PC-3 (cell line): ENCODE measurements at regions of chr12 and their contacts with region 1.

Region 1: DNA sequence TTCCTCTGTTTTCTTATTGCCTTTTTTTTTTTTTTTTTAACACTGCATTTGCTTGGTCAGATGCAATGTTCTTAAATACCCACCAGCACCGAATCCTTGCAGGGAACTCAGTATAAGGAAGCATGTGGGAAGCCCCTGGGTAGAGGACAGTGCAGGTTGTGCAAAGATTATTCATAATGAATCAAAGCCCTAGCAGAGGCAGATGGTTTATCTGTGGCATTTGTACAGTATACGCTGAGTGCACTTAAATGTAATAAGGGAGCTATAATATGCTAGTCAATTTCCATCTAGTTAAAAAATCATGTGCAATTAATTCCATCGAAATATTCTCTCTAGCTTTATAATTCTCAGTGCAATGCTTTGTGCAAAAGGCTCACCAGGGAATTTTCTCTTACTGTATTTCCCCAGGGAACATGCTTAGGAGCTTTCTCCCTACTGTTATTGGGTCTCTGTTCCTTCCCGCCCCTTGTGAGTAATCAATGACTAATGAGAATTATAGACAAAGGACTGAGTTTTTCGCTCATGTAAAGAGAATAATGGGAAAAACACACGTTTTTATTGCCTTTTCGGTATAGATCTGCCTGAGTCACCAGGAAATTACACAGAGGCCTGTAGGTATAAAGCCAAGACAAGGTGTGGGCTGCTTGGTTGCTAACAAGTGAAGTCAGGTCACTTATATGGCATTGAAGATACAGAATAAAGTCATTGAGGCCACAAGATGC is 1214.3 kb upstream of the TMEM132C start:
- DNase-seq: peak; percentile 99
- ATAC-seq: peak; percentile 82
- H3K4me3 ChIP-seq: peak overlapping the region; percentile 59
- H3K27ac ChIP-seq: peak overlapping the region; percentile 99
- H3K4me1 ChIP-seq: peaks cover 50% of the 10 kb centered on the region
- H3K27me3 ChIP-seq: no peaks in the 10 kb centered on the region
- CTCF ChIP-seq: no peak

Region 2: DNA sequence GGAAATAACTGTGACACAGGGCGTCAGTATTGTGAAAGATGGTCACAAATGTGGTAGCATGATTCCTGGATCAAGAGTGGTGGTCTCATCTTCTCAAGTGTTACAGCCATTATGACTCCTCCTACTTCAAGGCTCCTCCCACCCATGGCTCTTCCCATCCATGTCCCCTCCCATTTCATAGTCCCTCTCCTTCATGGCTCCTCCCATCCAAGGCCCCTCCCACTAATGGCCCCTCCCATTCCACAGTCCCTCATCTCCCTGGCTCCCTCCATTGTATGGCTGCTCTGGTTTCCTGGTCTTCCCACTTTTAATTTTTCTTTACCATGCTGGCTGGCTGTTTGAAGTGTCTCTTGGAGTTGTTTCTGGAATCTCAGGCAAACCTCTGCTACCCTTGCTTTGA is 160.9 kb before region 1 on chr12:
- CTCF ChIA-PET with region 1: no interaction called
- POLR2A ChIA-PET with region 1: no interaction called
- intact Hi-C with region 1: no loop called
- DNase-seq: peak; percentile 13
- ATAC-seq: no peak
- H3K4me3 ChIP-seq: no peak overlapping the region
- H3K27ac ChIP-seq: no peak overlapping the region
- H3K4me1 ChIP-seq: no peaks in the 10 kb centered on the region
- H3K27me3 ChIP-seq: peaks cover 82% of the 10 kb centered on the region
- CTCF ChIP-seq: no peak

Region 3: DNA sequence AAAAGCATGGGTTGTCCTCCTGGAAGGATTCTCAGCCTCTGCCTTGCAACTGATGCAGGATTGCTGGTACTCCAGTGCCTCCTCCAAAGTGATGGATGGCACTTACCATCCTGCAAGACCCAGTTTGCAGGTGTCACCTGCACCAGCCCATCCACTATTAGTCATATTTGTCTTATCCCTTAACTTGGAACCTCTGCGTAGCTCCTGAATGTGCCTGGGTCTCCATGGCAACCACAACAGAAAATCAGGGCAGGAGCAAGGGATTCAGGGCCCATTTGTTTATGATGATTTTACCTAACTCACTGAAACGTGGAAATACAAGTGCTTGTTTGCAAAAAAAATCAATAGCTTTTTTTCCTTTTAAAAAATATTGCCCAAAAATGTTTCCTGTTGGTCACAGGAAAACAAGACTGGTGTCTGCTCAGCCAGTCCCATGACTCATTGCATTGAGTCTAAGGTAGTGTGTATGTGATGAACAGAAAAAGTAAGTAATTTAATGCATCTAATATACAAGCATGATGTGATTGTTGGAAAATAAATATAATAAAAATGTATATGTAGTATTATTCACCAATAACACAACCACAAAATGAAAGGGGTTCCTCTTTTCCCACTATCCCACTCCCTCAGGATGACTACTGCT is 18.0 kb after region 1 on chr12:
- CTCF ChIA-PET with region 1: no interaction called
- POLR2A ChIA-PET with region 1: interaction called, 8 read pairs
- intact Hi-C with region 1: loop called (anchors 2 kb)
- DNase-seq: peak; percentile 40
- ATAC-seq: peak; percentile 92
- H3K4me3 ChIP-seq: no peak overlapping the region
- H3K27ac ChIP-seq: peak overlapping the region; percentile 75
- H3K4me1 ChIP-seq: peaks cover 11% of the 10 kb centered on the region; the same call in 1 of the 2 replicates
- H3K27me3 ChIP-seq: no peaks in the 10 kb centered on the region
- CTCF ChIP-seq: no peak

Region 4: DNA sequence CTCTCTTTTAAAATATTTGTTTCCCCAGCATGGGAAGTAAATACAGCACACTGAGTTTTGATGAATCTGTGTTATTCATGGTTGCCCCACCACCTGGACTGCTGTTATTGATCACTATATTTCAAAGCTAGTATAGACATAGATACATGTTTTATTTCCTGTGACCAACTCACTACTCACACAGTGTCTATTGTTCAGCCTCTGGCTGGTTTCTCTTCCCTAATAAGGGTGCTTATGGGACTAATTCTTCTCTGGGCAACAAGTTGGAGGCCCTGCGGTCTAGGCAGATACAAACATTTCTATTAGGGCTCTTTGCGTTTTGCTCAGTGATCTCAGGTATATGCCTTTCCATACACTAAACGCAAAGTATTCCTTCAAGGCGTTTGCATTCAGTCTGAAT is 23.3 kb after region 1 on chr12:
- CTCF ChIA-PET with region 1: no interaction called
- POLR2A ChIA-PET with region 1: interaction called, 5 read pairs
- intact Hi-C with region 1: loop called (anchors 1 kb)
- DNase-seq: peak; percentile 68
- ATAC-seq: peak; percentile 83
- H3K4me3 ChIP-seq: no peak overlapping the region
- H3K27ac ChIP-seq: peak overlapping the region; percentile 54
- H3K4me1 ChIP-seq: peaks cover 30% of the 10 kb centered on the region
- H3K27me3 ChIP-seq: no peaks in the 10 kb centered on the region
- CTCF ChIP-seq: no peak

Region 5: DNA sequence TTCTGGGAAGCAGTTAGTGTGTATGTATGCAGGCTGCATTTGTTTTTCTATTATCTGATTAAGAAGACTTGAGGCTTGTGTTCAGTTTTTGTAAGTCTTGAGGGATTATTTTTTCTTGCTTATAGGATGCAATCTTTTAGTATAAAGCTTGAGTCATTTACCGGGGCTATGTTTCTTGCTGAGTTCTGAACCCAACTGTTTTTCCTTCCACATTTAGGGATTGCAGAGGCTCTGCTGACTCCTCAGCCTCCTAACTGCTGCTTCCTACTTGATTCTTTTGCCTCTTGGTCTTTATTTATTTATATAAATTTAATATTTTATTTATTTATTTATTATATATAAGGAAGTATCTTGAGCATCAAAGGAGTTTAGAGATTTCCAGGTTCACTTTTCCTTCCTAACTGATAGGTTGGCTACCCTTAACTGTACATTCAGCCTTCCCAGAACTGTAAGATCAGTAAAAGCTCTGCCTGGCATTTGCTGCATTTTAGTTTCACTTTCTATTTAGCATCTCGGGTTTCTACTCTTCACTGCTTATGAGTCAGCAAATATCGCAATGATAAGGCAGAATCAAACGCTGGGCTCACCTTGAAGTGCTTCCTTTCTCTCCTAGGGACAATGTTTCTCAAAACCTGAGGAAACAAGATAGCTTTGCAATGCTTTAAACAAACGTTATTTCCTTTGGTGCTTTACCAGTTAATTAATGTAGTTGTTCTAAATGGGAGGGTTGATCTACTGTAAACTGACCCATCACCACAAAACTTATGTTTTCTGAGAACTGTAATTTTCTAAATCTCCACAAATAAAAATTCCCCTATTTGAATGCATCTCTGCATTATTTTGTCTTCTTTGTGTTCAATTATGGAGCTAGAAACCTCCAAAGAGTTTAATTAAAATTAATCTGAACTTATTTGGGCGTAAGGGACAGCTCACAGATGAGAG is 30.6 kb after region 1 on chr12:
- CTCF ChIA-PET with region 1: interaction called, 3 read pairs
- POLR2A ChIA-PET with region 1: no interaction called
- intact Hi-C with region 1: loop called (anchors 1 kb)
- DNase-seq: peak; percentile 91
- ATAC-seq: peak; percentile 66
- H3K4me3 ChIP-seq: peak overlapping the region; percentile 60
- H3K27ac ChIP-seq: peak overlapping the region; percentile 70
- H3K4me1 ChIP-seq: peaks cover 40% of the 10 kb centered on the region
- H3K27me3 ChIP-seq: no peaks in the 10 kb centered on the region
- CTCF ChIP-seq: no peak

Region 6: DNA sequence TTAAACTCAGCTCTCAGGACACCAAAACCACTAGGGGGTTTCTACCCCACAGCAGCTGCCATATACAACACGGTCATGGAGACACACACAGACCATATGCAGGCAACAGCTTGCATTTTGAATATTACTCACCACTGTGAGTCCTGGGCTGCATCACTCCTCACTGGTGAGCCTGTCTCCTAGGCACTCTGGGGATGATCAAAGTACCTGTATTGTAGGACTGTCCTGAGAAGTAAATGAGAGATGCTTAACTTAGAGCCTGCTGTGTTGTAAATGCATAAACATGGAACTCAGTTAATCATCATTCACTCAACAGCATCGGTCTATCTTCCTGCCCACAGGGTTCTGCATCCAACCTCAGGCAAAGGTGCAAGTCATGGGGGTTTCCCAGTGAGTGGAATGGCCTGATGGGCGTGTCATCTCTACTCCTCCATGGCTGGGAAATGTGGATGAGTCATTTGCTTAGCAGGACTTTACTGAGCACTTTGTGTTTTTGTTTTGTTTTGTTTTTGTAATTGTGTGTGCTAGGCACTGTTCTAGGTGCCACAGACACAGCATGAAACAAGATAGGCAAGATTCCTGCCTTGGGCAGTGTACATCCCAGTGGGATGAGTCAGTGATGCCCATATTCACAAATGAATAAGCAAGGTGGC is 73.1 kb after region 1 on chr12:
- CTCF ChIA-PET with region 1: no interaction called
- POLR2A ChIA-PET with region 1: no interaction called
- intact Hi-C with region 1: loop called (anchors 2 kb)
- DNase-seq: peak; percentile 99
- ATAC-seq: peak; percentile 90
- H3K4me3 ChIP-seq: peak overlapping the region; percentile 20; the same call in 1 of the 2 replicates
- H3K27ac ChIP-seq: peak overlapping the region; percentile 93
- H3K4me1 ChIP-seq: peaks cover 37% of the 10 kb centered on the region
- H3K27me3 ChIP-seq: no peaks in the 10 kb centered on the region
- CTCF ChIP-seq: 0 out of 2 replicates have a peak, but pooled peaks have one; percentile 14

Region 7: DNA sequence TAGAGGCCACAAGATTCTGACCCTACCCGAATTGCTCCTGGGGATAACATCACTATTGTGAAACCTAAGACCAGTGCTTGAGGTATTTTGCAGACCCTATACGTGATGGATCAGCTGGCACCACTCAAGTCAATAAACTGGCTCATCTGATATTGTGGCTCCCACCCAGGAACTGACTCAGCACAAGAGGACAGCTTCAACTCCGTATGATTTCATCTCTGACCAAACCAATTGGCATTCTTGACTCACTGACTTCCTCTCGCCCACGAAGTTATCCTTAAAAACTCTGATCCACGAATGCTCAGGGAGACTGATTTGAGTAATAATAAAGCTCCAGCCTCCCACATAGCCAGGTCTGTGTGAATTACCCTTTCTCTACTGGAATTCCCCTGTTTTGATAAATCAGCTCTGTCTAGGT is 178.2 kb after region 1 on chr12:
- CTCF ChIA-PET with region 1: no interaction called
- POLR2A ChIA-PET with region 1: no interaction called
- intact Hi-C with region 1: loop called (anchors 2 kb)
- DNase-seq: peak; percentile 99
- ATAC-seq: peak; percentile 86
- H3K4me3 ChIP-seq: peak overlapping the region; percentile 11; the same call in 1 of the 2 replicates
- H3K27ac ChIP-seq: peak overlapping the region; percentile 84
- H3K4me1 ChIP-seq: peaks cover 21% of the 10 kb centered on the region
- H3K27me3 ChIP-seq: no peaks in the 10 kb centered on the region
- CTCF ChIP-seq: no peak

Region 8: GRCh38 chr12:127270193-127270592 is 217.5 kb after region 1 on chr12:
- CTCF ChIA-PET with region 1: no interaction called
- POLR2A ChIA-PET with region 1: no interaction called
- intact Hi-C with region 1: loop called (anchors 5 kb)
- DNase-seq: peak; percentile 58
- ATAC-seq: no peak
- H3K4me3 ChIP-seq: no peak overlapping the region
- H3K27ac ChIP-seq: no peak overlapping the region
- H3K4me1 ChIP-seq: peaks cover 41% of the 10 kb centered on the region
- H3K27me3 ChIP-seq: no peaks in the 10 kb centered on the region
- CTCF ChIP-seq: no peak